CD8-positive, alpha-beta T cell (primary cell): ENCODE measurements at regions of chr17 and their contacts with region 1.

Region 1: GRCh38 chr17:76714822-76715495 is 4.2 kb upstream of the MXRA7 start:
- DNase-seq: peak; percentile 57 to 88 (median 76)
- ATAC-seq: peak; percentile 5
- H3K4me3 ChIP-seq: peak overlapping the region in 1 of 2 experiments; percentile 4
- H3K4me3 Mint-ChIP-seq: peak overlapping the region; percentile 55
- H3K27ac ChIP-seq: peak overlapping the region; percentile 71 to 83
- H3K27ac Mint-ChIP-seq: peak overlapping the region; percentile 97
- H3K4me1 ChIP-seq: peaks cover 54% of the 10 kb centered on the region
- H3K4me1 Mint-ChIP-seq: peaks cover 57% of the 10 kb centered on the region
- H3K27me3 ChIP-seq: no peaks in the 10 kb centered on the region
- H3K27me3 Mint-ChIP-seq: no peaks in the 10 kb centered on the region
- CTCF ChIP-seq: peak; percentile 95

Region 2: DNA sequence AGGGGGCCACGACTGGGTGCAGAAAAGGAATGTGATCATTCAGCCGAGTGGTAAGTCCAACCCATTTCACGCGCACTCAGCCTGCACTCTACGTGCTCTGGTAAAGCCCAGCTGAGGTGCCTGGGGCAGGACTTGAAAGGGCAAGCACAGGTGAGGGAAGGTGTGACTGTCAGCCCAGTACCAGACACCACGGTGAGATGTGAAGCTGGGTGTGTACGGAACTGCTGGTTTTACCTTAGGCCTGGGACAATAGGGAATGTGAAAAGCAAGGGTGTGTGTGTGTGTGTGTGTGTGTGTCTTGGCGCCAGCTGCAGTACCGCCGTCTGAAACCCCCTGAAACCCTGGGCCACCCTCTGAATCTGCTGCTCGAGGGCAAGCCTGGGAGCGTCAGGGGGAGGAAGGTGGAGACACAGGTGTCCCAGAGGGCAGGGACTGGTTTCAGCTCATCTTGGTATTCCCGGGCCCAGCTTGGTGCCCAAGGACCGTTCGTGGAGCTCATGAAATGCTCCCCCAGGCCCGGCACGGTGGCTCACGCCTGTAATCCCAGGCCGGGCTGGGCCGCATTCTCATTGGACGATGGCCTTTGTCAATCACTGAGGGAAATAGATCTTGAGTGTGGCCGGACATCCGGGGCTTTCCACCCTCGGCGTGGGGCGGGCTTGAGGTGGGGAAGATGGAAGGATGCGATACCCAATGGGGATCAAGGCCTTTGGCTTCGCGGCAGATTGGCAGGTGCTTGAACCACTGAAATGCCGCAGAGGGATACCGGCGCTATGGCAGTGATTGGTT is 43.6 kb before region 1 on chr17:
- CTCF ChIA-PET with region 1: interaction called, 6 read pairs
- POLR2A ChIA-PET with region 1: interaction called, 4 read pairs
- intact Hi-C with region 1: loop called (anchors 2 to 5 kb)
- DNase-seq: peak; percentile 96 to 100 (median 99)
- ATAC-seq: peak; percentile 97
- H3K4me3 ChIP-seq: peak overlapping the region; percentile 76 to 79
- H3K4me3 Mint-ChIP-seq: peak overlapping the region; percentile 90
- H3K27ac ChIP-seq: peak overlapping the region; percentile 71 to 90
- H3K27ac Mint-ChIP-seq: peak overlapping the region; percentile 96
- H3K4me1 ChIP-seq: peaks cover 39% of the 10 kb centered on the region
- H3K4me1 Mint-ChIP-seq: peaks cover 49% of the 10 kb centered on the region
- H3K27me3 ChIP-seq: no peaks in the 10 kb centered on the region
- H3K27me3 Mint-ChIP-seq: no peaks in the 10 kb centered on the region
- CTCF ChIP-seq: no peak

Region 3: GRCh38 chr17:76700617-76701470 is 14.1 kb before region 1 on chr17:
- CTCF ChIA-PET with region 1: interaction called, 32 read pairs
- POLR2A ChIA-PET with region 1: no interaction called
- intact Hi-C with region 1: no loop called
- DNase-seq: peak in 3 of 9 experiments; percentile 36 to 73 (median 67)
- ATAC-seq: peak; percentile 72
- H3K4me3 ChIP-seq: no peak overlapping the region
- H3K4me3 Mint-ChIP-seq: no peak overlapping the region
- H3K27ac ChIP-seq: peak overlapping the region in 1 of 2 experiments; percentile 50
- H3K27ac Mint-ChIP-seq: peak overlapping the region; percentile 79
- H3K4me1 ChIP-seq: no peaks in the 10 kb centered on the region
- H3K4me1 Mint-ChIP-seq: peaks cover 9% of the 10 kb centered on the region
- H3K27me3 ChIP-seq: no peaks in the 10 kb centered on the region
- H3K27me3 Mint-ChIP-seq: no peaks in the 10 kb centered on the region
- CTCF ChIP-seq: no peak

Region 4: DNA sequence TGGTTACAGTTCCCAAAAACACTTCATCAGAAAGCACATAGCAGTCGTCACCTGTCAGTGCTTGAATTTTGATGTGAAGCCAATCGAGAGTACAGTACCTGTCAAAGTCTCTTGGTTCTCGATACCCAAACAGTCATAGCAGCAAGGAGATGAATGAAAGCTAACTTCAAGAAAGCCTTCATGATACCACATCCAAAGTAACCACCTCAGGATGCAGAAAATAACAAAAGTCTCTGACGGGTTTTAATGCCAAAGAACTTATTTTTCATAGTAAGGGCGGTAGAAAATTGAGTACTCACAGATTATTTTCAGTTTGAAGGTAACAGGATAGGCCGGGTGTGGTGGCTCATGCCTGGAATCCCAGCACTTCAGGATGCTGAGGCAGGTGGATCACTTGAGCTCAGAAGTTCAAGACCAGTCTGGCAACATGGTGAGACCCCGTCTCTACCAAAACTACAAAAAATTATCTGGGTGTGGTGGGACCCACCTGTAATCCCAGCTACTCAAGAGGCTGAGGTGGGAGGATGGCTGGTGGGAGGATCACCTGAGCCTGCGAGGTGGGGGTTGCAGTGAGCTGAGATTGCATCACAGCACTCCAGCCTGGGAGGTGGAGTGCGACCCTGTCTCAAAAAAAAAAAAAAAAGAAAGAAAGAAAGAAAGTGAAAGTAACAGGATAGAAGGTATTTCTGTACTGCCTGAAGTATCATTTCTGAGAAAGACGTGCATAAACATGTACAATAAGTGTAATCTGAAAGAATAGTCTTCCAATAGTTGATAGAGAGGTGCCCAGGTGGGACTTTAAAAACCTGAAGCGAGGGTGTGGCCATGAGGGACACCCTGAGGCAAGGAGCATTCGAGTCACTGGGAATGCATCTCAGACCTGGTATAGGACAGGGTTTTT is 38.4 kb after region 1 on chr17:
- CTCF ChIA-PET with region 1: interaction called, 4 read pairs
- POLR2A ChIA-PET with region 1: no interaction called
- intact Hi-C with region 1: loop called (anchors 1 to 5 kb)
- DNase-seq: peak in 6 of 9 experiments; percentile 16 to 87 (median 58)
- ATAC-seq: peak; percentile 82
- H3K4me3 ChIP-seq: peak overlapping the region; percentile 40 to 54
- H3K4me3 Mint-ChIP-seq: peak overlapping the region; percentile 84
- H3K27ac ChIP-seq: peak overlapping the region; percentile 86 to 93
- H3K27ac Mint-ChIP-seq: peak overlapping the region; percentile 98
- H3K4me1 ChIP-seq: peaks cover 20% of the 10 kb centered on the region
- H3K4me1 Mint-ChIP-seq: peaks cover 23% of the 10 kb centered on the region
- H3K27me3 ChIP-seq: no peaks in the 10 kb centered on the region
- H3K27me3 Mint-ChIP-seq: no peaks in the 10 kb centered on the region
- CTCF ChIP-seq: no peak